PC-9 (cell line): ENCODE measurements at regions of chr12 and their contacts with region 1.

Region 1: DNA sequence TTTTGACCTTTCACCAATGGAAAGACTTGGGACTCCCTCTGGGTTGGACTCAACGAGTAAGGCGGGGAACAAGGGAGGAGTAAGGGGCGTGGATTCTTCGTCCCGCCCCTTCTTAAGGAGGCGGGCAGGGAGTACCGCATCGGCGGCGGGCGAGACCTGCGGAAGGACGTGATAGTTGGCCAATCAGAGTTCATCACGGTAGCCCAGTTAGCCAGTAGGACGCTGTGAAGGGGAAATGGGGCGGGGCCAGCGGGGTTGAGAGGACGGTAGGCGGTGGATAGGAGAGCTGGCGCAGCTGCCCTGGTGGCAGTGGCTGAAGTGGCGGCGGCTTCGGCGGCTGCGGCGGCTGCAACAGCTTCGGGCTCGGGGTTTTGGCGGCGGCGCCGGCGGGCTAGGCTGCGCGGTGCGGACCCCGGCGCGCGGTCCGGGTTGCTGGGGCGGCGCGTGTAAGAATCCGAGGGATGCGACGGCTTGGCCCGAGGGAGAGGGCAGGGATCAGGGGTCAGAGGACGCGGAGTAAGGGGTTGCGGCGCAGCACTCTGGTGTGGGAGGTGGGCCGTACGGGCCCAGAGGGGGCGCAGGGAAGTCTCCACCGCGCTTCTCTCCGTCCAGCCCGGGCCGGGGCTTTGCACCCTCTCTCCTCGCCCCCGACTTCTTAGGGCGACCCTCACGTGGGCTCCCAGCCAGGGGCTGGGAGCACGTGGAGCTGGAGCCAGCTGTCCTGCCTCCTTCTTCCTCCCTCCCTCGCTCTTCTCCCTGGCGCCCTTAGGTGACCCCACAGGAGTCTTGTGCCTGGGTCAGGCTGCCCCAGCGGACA is at the start of gene TPCN1:
- DNase-seq: peak; percentile 99 to 100
- H3K4me3 ChIP-seq: peak within 1 kb of the TSS; percentile 74
- H3K27ac ChIP-seq: peak within 1 kb of the TSS; percentile 82
- H3K4me1 ChIP-seq: peaks cover 44% of the 10 kb centered on the region
- H3K27me3 ChIP-seq: no peaks in the 10 kb centered on the region
- CTCF ChIP-seq: no peak
- total RNA-seq, gene TPCN1: 34.1 and 42.7 TPM in 2 replicates

Region 2: DNA sequence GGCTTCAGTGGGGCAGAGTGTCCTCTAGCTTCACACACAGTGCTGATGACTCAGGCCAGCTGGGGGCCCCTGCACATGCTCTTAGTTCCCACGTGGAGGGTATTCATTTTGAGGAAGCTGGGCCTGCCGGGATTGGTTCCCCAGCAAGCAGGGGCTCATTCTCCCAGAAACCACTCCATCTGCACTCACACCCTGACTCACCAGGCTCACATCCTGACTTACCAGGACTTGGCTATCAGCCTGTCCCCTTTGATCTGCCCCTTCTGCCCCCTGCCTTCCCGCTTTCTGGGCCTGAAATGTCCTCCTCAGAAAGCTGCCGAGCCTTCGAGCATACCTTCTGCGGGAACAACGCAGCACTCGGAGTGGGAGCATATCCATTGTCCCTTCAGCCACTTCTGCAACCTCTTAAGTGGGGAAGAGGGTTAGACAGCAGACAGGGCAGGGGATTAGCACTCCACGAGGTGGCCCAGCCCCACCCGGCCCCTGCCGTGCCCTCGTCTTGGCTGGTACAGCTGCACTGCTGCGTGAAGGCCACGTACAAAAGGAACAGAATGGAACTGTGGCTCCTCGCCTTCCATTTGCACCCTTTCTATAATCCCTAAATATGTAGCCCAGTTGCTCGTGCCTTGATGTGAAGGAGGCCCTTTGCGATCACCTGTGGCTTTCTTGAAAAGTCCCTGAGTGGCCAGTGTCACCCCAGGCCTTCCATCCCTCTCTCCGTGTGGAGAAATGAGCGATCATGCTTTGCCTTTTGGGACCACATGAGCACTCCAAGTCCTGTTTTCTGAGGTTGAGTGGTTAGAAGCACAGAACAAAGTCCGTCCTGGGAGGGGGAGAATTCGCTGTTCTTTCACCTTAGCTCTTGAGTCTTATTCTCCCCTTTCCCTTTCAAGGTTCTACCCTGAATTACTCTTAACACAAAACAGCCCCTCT is 26.0 kb after region 1 on chr12:
- CTCF ChIA-PET with region 1: interaction called, 3 read pairs
- POLR2A ChIA-PET with region 1: interaction called, 6 read pairs
- intact Hi-C with region 1: loop called (anchors 2 kb)
- DNase-seq: peak in 1 of 2 experiments; percentile 38
- H3K4me3 ChIP-seq: no peak overlapping the region
- H3K27ac ChIP-seq: peak overlapping the region; percentile 83
- H3K4me1 ChIP-seq: peaks cover 50% of the 10 kb centered on the region
- H3K27me3 ChIP-seq: no peaks in the 10 kb centered on the region
- CTCF ChIP-seq: no peak

Region 3: DNA sequence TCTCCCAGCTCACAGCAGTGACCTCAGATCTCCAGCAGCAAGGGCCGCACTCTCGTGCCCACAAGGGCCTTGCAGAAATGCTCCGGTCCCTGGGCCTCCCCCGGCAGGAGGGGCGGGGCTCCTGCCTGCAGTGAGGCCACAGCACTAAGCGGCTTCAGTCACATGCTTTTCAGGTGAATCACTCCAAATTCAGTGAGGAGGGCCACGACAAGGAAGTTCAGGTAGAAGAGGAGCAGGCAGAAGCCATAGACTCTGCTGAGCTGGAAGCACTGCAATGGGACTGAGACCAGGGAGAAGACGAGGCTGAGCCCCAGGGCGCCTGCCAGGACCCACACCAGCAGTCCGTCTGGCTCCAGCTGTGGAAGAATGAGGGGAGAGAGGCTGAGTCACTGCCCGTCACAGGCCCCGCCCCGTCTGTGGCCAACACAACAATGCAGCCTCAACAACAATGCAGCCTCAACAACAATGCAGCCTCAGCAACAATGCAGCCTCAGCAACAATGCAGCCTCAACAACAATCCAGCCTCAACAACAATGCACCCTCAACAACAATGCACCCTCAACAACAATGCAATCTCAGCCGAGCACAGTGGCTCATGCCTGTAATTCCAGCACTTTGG is 78.3 kb after region 1 on chr12:
- CTCF ChIA-PET with region 1: no interaction called
- POLR2A ChIA-PET with region 1: interaction called, 4 read pairs
- intact Hi-C with region 1: loop called (anchors 1 kb)
- DNase-seq: peak; percentile 87 to 96
- H3K4me3 ChIP-seq: no peak overlapping the region
- H3K27ac ChIP-seq: peak overlapping the region; percentile 62
- H3K4me1 ChIP-seq: peaks cover 19% of the 10 kb centered on the region
- H3K27me3 ChIP-seq: no peaks in the 10 kb centered on the region
- CTCF ChIP-seq: no peak

Region 4: DNA sequence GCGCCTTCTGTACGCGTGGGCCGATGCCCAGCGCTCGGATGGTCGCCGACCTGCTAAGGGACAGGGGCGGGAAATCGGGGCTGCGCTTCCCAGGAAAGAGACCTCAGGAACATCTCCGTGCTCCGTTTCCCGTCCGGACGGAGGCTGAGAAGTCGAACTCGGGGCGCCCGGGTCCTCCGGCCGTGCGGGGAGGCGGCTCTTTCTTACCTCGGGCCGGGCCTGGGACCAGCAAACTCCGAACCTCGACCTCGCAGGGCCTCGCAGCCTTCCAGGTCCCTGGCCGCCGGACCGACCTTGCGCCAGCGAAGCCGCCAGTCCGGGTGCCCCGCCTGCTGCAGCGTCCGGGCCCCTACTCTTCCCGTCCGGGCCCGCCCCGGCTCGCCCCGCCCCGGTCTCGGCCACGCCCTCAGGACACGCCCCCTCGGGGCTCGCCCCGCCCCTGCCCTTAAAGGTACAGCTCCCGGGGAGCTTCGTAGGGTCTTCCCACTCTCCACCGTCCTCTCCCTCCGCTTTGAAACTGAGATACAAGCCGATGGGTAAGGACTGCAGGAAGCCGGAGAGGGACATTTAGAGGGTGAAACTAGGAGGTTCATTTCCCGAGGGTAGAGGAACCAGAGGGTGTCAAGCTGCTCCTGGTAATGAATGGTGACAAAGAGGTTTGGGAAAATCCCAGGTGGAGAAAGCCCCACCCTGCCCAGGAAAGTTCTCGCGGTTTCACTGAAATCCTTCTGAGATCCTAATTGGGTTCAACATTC is 113.6 kb after region 1 on chr12 and contains the start of gene SLC8B1:
- CTCF ChIA-PET with region 1: no interaction called
- POLR2A ChIA-PET with region 1: interaction called, 18 read pairs
- intact Hi-C with region 1: no loop called
- DNase-seq: peak; percentile 61 to 85
- H3K4me3 ChIP-seq: peak within 1 kb of the TSS; percentile 79
- H3K27ac ChIP-seq: peak within 1 kb of the TSS; percentile 30; the same call in 1 of the 2 replicates
- H3K4me1 ChIP-seq: no peaks in the 10 kb centered on the region; the same call in 1 of the 2 replicates
- H3K27me3 ChIP-seq: no peaks in the 10 kb centered on the region
- CTCF ChIP-seq: no peak
- total RNA-seq, gene SLC8B1: 29.0 and 39.1 TPM in 2 replicates

Region 5: DNA sequence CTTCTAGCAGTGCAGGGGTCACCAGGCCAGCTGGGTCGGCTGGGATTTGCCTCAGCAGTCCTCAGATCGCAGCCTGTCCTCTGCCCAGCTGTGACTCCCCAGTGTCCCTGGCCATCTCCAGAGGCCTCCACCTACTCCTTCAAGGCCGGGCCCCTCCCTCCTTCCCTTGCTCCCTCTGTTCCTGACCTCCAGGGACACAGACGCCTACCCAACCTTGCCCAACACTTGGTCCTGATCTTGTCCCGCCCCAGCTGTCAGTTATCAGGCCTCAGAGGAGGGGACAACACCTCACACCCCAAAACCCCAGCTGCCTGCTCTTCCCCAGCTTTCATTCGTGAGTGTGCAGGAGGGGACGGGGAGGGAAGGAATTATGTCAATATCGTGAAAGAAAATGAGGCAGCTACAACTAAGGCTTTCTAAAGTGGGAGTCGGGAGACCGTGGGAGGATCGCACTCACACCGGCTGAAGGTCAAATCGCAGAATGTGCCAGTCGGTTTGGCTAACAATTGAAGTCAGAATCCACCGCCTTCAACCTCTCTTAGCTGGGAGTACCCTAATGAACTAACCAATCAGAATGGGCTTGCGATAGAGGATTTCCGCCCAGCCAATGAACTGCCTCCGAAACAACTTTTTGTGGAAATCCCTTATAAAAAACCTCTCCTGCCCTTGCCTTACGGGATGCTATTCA is 127.6 kb after region 1 on chr12:
- CTCF ChIA-PET with region 1: no interaction called
- POLR2A ChIA-PET with region 1: no interaction called
- intact Hi-C with region 1: no loop called
- DNase-seq: no peak
- H3K4me3 ChIP-seq: no peak overlapping the region
- H3K27ac ChIP-seq: no peak overlapping the region
- H3K4me1 ChIP-seq: no peaks in the 10 kb centered on the region
- H3K27me3 ChIP-seq: no peaks in the 10 kb centered on the region
- CTCF ChIP-seq: no peak

Region 6: GRCh38 chr12:113422030-113422885 is 200.9 kb after region 1 on chr12 and contains the start of gene SDSL:
- CTCF ChIA-PET with region 1: no interaction called
- POLR2A ChIA-PET with region 1: interaction called, 14 read pairs
- intact Hi-C with region 1: no loop called
- DNase-seq: peak; percentile 76 to 83
- H3K4me3 ChIP-seq: peak within 1 kb of the TSS; percentile 81
- H3K27ac ChIP-seq: peak within 1 kb of the TSS; percentile 50
- H3K4me1 ChIP-seq: peaks cover 7% of the 10 kb centered on the region; the same call in 1 of the 2 replicates
- H3K27me3 ChIP-seq: no peaks in the 10 kb centered on the region
- CTCF ChIP-seq: no peak
- total RNA-seq, gene SDSL: 14.2 and 26.6 TPM in 2 replicates